HepG2 (cell line): ENCODE measurements at regions of chr5 and their contacts with region 1.

Region 1: DNA sequence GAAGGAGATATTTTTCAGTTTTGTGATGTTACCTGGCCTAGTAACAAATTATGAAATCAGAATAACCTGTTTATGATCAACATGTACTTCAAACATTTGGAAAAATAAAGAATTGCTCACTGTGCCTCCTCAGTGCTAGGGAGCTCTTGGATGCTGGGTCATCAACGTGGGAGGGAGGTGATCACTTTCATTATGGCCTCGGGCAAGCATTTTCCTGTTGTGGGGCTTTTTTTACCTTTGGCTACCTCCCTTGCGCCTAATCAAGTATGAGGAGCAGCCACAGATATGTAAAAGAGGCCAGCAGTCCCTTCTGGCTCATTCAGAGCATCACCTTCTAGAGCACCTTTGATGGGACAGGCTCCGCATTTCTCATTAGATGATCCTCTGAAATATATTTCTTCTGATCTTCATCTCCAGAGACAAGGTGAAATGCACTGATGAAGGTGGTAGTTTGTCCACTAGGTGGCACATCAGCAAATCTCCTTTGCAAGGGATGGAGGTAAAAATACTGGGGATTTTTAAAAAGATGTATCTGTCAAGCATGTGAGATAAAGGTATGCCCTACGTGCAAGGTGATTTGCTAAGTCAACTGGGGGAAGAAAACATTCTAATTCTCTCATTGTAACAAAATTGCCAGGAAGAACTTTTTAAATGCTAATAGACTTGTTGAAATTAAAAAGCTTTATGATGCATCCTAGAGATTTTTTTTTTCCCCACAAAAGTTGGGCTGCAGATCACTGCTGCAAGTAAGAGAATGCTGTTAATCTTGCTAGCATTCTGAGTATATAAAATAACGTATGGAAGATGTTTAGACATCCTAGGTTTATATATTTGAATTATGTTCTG is 218.2 kb downstream of the MAST4 start:
- DNase-seq: peak; percentile 32
- ATAC-seq: peak; percentile 65; the same call in 2 of the 3 replicates
- H3K4me3 ChIP-seq: no peak overlapping the region
- H3K27ac ChIP-seq: no peak overlapping the region
- H3K4me1 ChIP-seq: no peaks in the 10 kb centered on the region
- H3K27me3 ChIP-seq: no peaks in the 10 kb centered on the region; a peak in 2 of 5 replicates
- CTCF ChIP-seq: peak; percentile 59
- EP300 ChIP-seq: no peak
- POLR2A ChIP-seq: no peak
- RAD21 ChIP-seq: no peak

Region 2: DNA sequence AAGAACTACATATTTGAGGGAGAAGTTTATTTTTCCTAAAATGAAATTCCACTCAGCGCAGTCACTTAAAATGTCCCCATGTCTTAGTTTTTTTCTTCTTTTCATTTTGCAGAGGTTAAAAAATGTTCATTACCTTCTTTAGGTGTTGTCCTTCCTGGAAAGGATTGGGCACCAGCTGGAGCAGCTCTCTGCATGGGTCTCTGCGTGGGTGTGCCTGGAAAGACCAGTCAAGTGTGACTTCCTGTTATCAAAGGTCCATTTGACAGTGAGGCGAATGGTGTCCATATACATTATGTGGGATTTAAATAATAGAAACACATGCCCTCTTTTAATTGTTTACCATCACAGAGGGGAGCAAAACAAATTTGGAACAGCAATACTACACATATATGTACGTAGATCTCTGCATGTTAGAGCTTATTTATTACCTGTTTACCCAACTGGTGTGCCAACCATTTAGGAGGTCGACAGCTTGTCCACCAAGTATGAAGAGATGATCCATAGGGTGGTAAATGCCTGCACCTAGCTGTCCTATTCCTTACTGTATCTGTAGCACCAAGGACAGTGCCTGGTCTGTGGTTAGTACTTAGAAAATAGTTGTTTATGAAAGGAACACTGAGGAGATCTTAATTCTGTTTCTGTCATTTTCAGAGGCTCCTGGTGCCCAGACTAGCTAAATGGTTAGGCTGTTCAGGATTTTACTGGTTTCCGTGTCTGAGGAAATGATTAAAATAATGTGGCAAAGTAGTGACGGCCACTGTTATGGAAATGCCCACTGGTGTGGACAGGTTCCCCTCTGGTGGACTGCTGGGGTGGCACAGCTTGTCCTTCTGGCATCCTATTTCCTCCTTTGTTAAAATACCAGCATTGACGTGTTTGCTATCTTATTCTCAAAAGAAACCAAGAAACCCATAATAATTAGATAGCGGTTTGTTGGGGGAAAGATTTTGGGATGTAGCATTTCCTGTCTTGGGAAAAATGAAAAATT is 17.8 kb before region 1 on chr5:
- CTCF ChIA-PET with region 1: no interaction called
- POLR2A ChIA-PET with region 1: no interaction called
- in situ Hi-C with region 1: no loop called
- intact Hi-C with region 1: no loop called
- DNase-seq: no peak
- ATAC-seq: peak; percentile 36; the same call in 1 of the 3 replicates
- H3K4me3 ChIP-seq: no peak overlapping the region
- H3K27ac ChIP-seq: no peak overlapping the region
- H3K4me1 ChIP-seq: no peaks in the 10 kb centered on the region
- H3K27me3 ChIP-seq: no peaks in the 10 kb centered on the region
- CTCF ChIP-seq: no peak
- EP300 ChIP-seq: no peak
- POLR2A ChIP-seq: no peak
- RAD21 ChIP-seq: no peak

Region 3: DNA sequence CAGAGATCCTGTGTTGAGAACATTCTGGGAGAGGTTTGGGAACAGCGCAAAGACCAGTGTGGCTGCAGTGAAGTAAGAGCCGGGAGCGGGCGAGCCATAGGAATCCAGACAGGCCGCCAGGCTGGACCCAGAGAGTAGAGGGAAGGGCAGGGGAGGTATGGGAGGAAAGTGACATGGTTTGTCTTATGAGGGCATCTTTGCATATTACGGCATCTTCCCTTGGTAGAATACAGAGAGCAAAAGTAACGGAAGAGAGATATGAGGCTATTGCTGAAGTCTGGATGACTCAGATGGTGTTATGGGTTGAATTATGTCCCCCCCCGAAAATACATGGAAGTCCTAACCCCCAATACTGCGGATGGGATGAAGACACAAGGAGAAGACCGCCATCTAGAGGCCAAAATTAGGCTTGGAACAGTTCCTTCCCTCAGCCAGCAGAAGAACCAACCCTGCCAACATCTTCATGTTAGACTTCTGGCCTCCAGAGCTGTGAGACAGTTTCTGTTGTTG is 50.0 kb after region 1 on chr5:
- CTCF ChIA-PET with region 1: interaction called, 16 read pairs
- POLR2A ChIA-PET with region 1: no interaction called
- in situ Hi-C with region 1: no loop called
- intact Hi-C with region 1: loop called (anchors 2 kb)
- DNase-seq: peak; percentile 15
- ATAC-seq: peak; percentile 78
- H3K4me3 ChIP-seq: no peak overlapping the region
- H3K27ac ChIP-seq: no peak overlapping the region
- H3K4me1 ChIP-seq: no peaks in the 10 kb centered on the region
- H3K27me3 ChIP-seq: 0 out of 5 replicates have a peak, but pooled peaks cover 0 to 3% of the 10 kb centered on the region in 2 experiments
- CTCF ChIP-seq: peak; percentile 66
- EP300 ChIP-seq: no peak
- POLR2A ChIP-seq: no peak
- RAD21 ChIP-seq: no peak

Region 4: DNA sequence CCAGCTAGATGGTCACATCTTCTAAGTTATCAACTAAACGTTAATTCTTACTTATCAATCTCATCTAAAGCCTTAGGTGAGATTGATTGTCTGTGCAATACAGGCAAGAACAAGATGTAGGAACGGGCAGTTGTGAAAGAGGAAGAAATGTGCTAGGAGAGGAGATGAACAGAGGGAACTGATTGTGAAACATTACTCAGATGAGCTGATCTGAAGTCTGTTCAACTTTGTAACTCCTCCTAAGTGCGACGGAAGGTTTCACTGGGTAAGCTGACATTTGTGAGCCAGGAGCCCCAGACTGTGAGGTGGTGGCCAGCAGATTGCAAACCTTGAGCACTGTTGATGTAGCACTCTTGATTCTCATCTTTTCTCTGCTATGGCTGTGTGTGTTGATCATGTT is 178.2 kb after region 1 on chr5:
- CTCF ChIA-PET with region 1: no interaction called
- POLR2A ChIA-PET with region 1: no interaction called
- in situ Hi-C with region 1: no loop called
- intact Hi-C with region 1: no loop called
- DNase-seq: no peak
- ATAC-seq: no peak; the same call in 2 of the 3 replicates
- H3K4me3 ChIP-seq: no peak overlapping the region
- H3K27ac ChIP-seq: no peak overlapping the region
- H3K4me1 ChIP-seq: peaks cover 54% of the 10 kb centered on the region
- H3K27me3 ChIP-seq: no peaks in the 10 kb centered on the region
- CTCF ChIP-seq: no peak
- EP300 ChIP-seq: no peak
- POLR2A ChIP-seq: no peak
- RAD21 ChIP-seq: no peak

Region 5: GRCh38 chr5:67032921-67033664 is 218.7 kb after region 1 on chr5:
- CTCF ChIA-PET with region 1: no interaction called
- POLR2A ChIA-PET with region 1: no interaction called
- in situ Hi-C with region 1: no loop called
- intact Hi-C with region 1: no loop called
- DNase-seq: no peak
- ATAC-seq: no peak
- H3K4me3 ChIP-seq: no peak overlapping the region
- H3K27ac ChIP-seq: no peak overlapping the region
- H3K4me1 ChIP-seq: peaks cover 27% of the 10 kb centered on the region
- H3K27me3 ChIP-seq: no peaks in the 10 kb centered on the region
- CTCF ChIP-seq: no peak
- EP300 ChIP-seq: no peak
- POLR2A ChIP-seq: no peak
- RAD21 ChIP-seq: no peak

Region 6: GRCh38 chr5:67149951-67150523 is 335.7 kb after region 1 on chr5:
- CTCF ChIA-PET with region 1: interaction called, 9 read pairs
- POLR2A ChIA-PET with region 1: no interaction called
- in situ Hi-C with region 1: no loop called
- intact Hi-C with region 1: loop called (anchors 1 kb)
- DNase-seq: no peak
- ATAC-seq: no peak
- H3K4me3 ChIP-seq: no peak overlapping the region
- H3K27ac ChIP-seq: no peak overlapping the region
- H3K4me1 ChIP-seq: peaks cover 30% of the 10 kb centered on the region
- H3K27me3 ChIP-seq: no peaks in the 10 kb centered on the region
- CTCF ChIP-seq: peak; percentile 42
- EP300 ChIP-seq: no peak
- POLR2A ChIP-seq: no peak
- RAD21 ChIP-seq: peak; percentile 50; the same call in 1 of the 2 replicates

Region 7: DNA sequence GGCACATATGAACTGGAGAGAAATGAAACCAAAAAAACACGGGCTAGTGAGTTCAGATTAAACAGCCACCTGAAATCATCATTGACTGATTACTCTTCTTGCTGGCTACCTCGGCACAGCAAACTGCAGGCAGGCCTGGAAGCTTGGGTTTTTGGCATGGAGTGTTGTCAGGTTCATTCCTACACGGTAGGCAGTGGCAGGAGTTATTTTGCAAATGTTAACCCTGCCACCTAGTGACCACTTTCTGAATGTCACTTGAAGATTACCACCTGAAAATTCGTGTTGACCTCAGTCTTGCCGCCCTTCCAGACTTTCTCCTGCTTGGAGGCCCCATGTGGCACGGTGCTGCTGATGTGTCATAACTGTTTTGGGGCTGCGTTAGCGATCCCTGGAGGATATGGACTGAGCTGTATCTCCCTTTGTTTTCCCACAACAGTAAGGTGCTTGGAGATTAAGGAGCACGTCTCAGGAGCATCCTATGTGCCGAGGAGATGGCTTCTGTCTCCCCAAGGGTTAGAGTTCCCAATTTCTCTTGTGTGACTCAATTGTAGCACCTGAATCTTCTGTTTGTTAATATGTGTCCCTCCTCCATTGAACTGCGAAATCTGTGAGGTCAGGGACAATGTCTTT is 394.9 kb after region 1 on chr5:
- CTCF ChIA-PET with region 1: interaction called, 13 read pairs
- POLR2A ChIA-PET with region 1: no interaction called
- in situ Hi-C with region 1: loop called (anchors 5 kb)
- intact Hi-C with region 1: loop called (anchors 1 kb)
- DNase-seq: peak; percentile 61
- ATAC-seq: peak; percentile 94
- H3K4me3 ChIP-seq: no peak overlapping the region
- H3K27ac ChIP-seq: no peak overlapping the region
- H3K4me1 ChIP-seq: peaks cover 5% of the 10 kb centered on the region; the same call in 1 of the 2 replicates
- H3K27me3 ChIP-seq: no peaks in the 10 kb centered on the region
- CTCF ChIP-seq: peak; percentile 91
- EP300 ChIP-seq: no peak
- POLR2A ChIP-seq: no peak
- RAD21 ChIP-seq: peak; percentile 76